ENCODE measurements at regions of chr19 and their contacts with region 1.

Region 1: DNA sequence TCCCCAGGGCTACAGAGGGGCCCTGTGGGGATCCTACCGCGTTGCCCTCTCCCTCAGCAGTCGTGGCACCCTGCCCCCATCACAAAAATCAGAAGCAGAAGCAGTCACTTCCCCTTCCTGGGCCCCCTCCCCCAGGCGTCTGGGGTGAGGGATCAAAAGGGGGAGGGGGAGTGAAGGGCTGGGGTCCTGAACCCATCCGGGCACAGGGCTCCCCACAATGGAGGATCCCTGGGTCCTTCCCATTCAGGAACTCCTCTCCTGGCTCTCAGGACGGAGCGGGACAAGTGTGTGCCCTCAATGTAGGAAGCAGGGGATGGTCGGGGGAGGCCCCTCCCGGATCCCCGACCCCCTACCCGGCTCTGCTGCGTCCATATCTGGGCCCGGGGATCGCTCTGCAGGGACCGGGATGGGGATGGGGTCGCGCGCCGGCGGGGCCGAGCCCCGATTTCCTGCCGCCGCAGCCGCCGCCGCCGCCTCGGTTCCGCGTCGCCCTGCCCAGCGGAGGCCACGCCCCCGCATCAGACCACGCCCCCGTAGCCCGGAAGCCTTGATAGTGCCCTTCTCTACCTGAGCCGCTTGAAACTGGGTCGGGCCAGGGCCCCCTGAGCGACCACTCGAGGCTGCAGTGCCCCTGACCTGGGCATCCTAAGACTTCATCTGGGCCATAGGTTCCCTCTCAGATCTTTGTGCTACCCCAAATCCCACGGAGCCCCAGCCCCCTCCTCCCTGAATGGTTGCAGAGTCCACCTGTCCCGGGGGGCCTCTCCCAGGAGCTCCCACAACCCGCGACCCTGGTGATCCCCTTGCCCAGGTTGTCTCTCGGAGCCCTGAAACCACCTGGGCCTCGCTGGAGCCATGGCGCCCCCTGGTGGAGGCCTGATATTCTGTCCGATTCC is at the start of gene GMIP:
- DNase-seq: peak; percentile 82
- H3K4me3 Mint-ChIP-seq: peak within 1 kb of the TSS; percentile 95
- H3K27ac Mint-ChIP-seq: peak within 1 kb of the TSS; percentile 93
- H3K4me1 Mint-ChIP-seq: peaks cover 18% of the 10 kb centered on the region
- H3K27me3 Mint-ChIP-seq: no peaks in the 10 kb centered on the region
- total RNA-seq, gene GMIP: 67.8 and 71.6 TPM in 2 replicates

Region 2: GRCh38 chr19:19531951-19532805 is 111.2 kb before region 1 on chr19:
- intact Hi-C with region 1: loop called (anchors 1 kb)
- DNase-seq: peak; percentile 79
- H3K4me3 Mint-ChIP-seq: no peak overlapping the region
- H3K27ac Mint-ChIP-seq: peak overlapping the region; percentile 67
- H3K4me1 Mint-ChIP-seq: peaks cover 7% of the 10 kb centered on the region
- H3K27me3 Mint-ChIP-seq: peaks cover 3% of the 10 kb centered on the region

Region 3: GRCh38 chr19:19562665-19563347 is 80.6 kb before region 1 on chr19:
- intact Hi-C with region 1: loop called (anchors 1 kb)
- DNase-seq: no peak
- H3K4me3 Mint-ChIP-seq: no peak overlapping the region
- H3K27ac Mint-ChIP-seq: no peak overlapping the region
- H3K4me1 Mint-ChIP-seq: peaks cover 6% of the 10 kb centered on the region
- H3K27me3 Mint-ChIP-seq: no peaks in the 10 kb centered on the region

Region 4: DNA sequence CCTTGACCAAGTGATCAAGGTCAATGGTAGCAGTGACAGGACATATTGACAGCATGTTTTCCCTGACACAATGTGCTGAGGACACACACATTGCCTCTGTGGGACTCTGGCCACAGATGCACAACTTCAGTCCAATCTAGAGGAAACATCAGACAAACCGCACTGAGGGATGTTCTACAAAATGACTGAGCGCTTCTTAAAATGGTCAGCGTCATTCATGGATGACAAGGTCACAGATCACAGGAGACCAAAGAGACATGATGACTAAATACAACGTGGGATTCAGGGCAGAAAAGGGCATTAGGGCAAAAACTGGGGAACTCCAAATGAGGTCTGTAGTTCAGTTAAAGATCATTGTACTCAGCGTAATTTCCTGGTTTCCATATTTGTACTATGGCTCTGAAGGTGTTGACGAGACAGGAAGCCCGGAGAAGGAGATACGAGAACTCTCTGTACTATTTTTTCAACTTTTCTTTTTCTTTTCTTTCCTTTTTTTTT is 45.5 kb before region 1 on chr19:
- intact Hi-C with region 1: loop called (anchors 2 kb)
- DNase-seq: peak; percentile 73
- H3K4me3 Mint-ChIP-seq: peak overlapping the region; percentile 79
- H3K27ac Mint-ChIP-seq: peak overlapping the region; percentile 99
- H3K4me1 Mint-ChIP-seq: peaks cover 69% of the 10 kb centered on the region
- H3K27me3 Mint-ChIP-seq: no peaks in the 10 kb centered on the region

Region 5: DNA sequence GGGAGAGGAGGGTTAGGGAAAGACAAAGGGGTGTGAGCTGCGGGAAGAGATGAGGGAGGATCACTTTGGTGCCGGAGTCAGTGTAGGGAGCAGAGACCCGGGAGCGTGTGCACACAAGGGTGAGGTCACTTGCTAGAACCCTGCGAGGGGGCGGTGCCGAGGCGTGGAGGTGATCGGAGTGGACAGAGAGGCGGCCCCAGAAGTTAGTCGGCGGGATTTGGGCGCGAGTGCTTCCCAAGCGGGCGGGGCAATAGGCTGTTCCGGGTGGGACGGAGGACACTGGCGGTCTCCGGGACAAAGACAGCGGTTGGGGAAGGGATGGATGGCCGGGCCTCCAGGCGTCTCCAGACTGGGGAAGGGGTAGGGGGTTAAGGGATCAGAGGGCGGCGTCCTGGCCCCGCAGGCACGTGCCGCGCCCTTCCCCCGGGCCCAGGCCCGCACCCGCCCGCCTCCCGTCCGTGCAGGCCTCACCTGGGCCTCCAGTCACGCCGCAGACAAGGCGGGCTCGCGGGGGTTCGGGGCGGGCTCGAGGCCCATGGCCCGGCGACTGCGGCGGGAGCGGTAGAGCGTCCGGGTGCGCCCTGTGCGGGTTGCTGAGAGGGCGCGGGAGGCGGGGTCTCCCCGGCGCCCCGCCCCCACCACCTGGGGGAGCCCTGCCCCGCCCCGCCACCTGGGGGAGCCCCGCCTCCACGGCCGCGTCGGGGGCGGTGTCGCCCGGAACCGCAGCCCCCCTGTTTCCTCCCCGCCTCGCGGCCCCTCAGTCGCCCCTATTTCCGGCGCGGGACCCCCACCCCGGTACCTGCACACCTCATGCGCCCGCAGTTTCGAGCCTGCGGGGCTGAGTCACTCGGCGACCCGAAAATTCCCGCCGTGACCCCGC is 15.5 kb before region 1 on chr19 and contains the start of gene LPAR2:
- intact Hi-C with region 1: loop called (anchors 1 kb)
- DNase-seq: peak; percentile 57
- H3K4me3 Mint-ChIP-seq: peak within 1 kb of the TSS; percentile 87
- H3K27ac Mint-ChIP-seq: peak within 1 kb of the TSS; percentile 96
- H3K4me1 Mint-ChIP-seq: peaks cover 20% of the 10 kb centered on the region
- H3K27me3 Mint-ChIP-seq: no peaks in the 10 kb centered on the region
- total RNA-seq, gene LPAR2: 25.8 and 27.4 TPM in 2 replicates

Region 6: DNA sequence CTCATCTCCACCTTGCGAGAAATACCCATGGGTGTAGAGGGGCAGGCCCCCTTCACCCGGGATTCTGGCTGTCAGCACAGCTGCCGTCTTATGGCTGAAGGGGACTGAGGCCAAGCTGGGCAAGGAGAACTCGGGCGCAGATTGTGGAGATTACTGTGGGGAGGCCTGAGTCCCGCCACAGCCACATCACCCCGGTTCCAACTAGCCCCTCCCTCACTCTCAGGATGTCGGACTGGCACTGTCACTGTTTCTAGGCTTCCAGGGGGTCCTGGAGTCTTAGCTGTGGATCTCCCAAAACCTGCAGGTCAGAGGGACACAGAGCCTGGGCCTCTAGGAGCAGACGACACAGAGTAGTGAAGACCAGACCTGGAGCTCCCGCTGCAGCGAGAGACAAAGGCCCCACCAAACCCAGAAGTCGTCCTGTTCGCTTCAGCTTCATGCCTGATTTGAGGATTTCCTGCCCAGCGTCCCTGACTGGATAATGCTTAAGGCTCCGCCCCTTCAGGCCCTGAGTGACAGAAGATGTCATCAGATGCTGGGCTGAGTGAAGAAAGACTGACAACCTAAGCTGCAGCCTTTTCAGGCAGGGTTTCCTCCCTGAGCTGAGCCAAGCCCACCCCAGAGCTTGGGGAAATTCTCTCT is 313.1 kb after region 1 on chr19:
- intact Hi-C with region 1: loop called (anchors 1 kb)
- DNase-seq: no peak
- H3K4me3 Mint-ChIP-seq: no peak overlapping the region
- H3K27ac Mint-ChIP-seq: no peak overlapping the region
- H3K4me1 Mint-ChIP-seq: no peaks in the 10 kb centered on the region
- H3K27me3 Mint-ChIP-seq: no peaks in the 10 kb centered on the region

Measured in activated T-helper 1 cell treated with anti-CD3 and anti-CD28 coated beads, Interleukin-12 subunit alpha, Interleukin-12 subunit beta, Interleukin-2, Interleukin-4 antibody, amounts not matched to agents 30 ng/mL and 10 ng/mL and 1 ng/mL, durations not matched to agents 14 hours and 24 hours and 36 hours (primary cell).